Psoas muscle (tissue), 8 donors: ENCODE measurements at regions of chr7 and their contacts with region 1.

Region 1: DNA sequence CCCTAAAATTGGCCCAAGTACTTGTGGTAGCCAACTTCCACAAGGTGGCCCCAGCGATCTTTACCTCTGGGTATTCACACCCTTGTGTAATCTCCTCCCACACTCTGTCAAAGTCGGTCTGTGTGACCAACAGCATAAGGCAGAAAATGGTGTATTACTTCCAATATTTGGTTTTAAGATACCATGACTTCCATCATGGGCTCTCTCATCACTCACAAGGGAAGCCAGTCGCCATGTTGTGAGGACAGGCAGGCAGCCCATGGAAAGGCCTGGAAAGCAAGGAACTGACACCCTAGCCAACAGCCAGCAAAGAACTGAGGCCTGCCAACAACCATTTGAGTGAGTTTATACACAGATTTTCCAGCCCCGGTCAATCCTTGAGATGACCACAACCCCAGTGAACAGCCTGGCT is 91.0 kb upstream of the KMT2E start:
- DNase-seq: peak; percentile 53 to 75
- ATAC-seq: peak; percentile 63 to 86 (median 72)
- H3K4me3 ChIP-seq: no peak overlapping the region
- H3K27ac ChIP-seq: no peak overlapping the region
- H3K4me1 ChIP-seq: no peaks in the 10 kb centered on the region
- H3K27me3 ChIP-seq: no peaks in the 10 kb centered on the region
- CTCF ChIP-seq: peak; percentile 58

Region 2: GRCh38 chr7:103573479-103574058 is 1349.4 kb before region 1 on chr7:
- intact Hi-C with region 1: loop called in 1 of 2 experiments (anchors 5 kb)
- DNase-seq: no peak
- ATAC-seq: no peak
- H3K4me3 ChIP-seq: no peak overlapping the region
- H3K27ac ChIP-seq: no peak overlapping the region
- H3K4me1 ChIP-seq: no peaks in the 10 kb centered on the region
- H3K27me3 ChIP-seq: no peaks in the 10 kb centered on the region
- CTCF ChIP-seq: peak; percentile 57

Region 3: GRCh38 chr7:104231054-104232046 is 691.7 kb before region 1 on chr7:
- intact Hi-C with region 1: loop called (anchors 2 to 5 kb)
- DNase-seq: no peak
- ATAC-seq: peak in 3 of 4 donors; percentile 49 to 82 (median 62)
- H3K4me3 ChIP-seq: no peak overlapping the region
- H3K27ac ChIP-seq: no peak overlapping the region
- H3K4me1 ChIP-seq: no peaks in the 10 kb centered on the region
- H3K27me3 ChIP-seq: no peaks in the 10 kb centered on the region
- CTCF ChIP-seq: peak; percentile 78

Region 4: GRCh38 chr7:104883718-104884452 is 39.1 kb before region 1 on chr7:
- intact Hi-C with region 1: loop called (anchors 1 to 5 kb)
- DNase-seq: peak; percentile 86 to 90
- ATAC-seq: peak; percentile 91 to 98 (median 97)
- H3K4me3 ChIP-seq: peak overlapping the region; percentile 30
- H3K27ac ChIP-seq: peak overlapping the region; percentile 63
- H3K4me1 ChIP-seq: peaks cover 4% of the 10 kb centered on the region
- H3K27me3 ChIP-seq: no peaks in the 10 kb centered on the region
- CTCF ChIP-seq: peak; percentile 88

Region 5: GRCh38 chr7:105013221-105013815 is 90.3 kb after region 1 on chr7:
- intact Hi-C with region 1: no loop called
- DNase-seq: peak; percentile 95 to 99
- ATAC-seq: peak; percentile 81 to 86 (median 84)
- H3K4me3 ChIP-seq: peak overlapping the region; percentile 92
- H3K27ac ChIP-seq: peak overlapping the region; percentile 100
- H3K4me1 ChIP-seq: peaks cover 35% of the 10 kb centered on the region
- H3K27me3 ChIP-seq: no peaks in the 10 kb centered on the region
- CTCF ChIP-seq: peak; percentile 45